ENCODE measurements at regions of chr3 and their contacts with region 1.

Region 1: DNA sequence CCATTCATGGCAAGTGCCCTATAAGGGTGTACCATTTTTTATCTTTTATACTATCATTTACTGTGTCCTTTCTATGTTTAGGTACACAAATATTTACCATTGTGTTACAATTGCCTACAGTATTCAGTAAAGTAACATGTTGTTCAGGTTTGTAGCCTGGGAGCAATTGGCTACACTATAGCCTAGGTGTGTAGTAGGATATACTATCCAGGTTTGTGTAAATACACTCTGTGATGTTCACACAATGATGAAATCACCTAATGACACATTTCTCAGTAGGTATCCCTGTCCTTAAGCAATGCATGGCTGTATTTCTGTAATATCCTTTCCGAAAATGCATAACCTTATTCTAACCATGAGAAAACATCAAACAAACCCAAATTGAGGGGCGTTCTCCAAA is 17.9 kb upstream of the CNOT10 start:
- DNase-seq: no peak
- ATAC-seq: no peak
- H3K4me3 ChIP-seq: no peak overlapping the region
- H3K27ac ChIP-seq: no peak overlapping the region
- H3K4me1 ChIP-seq: no peaks in the 10 kb centered on the region
- H3K27me3 ChIP-seq: no peaks in the 10 kb centered on the region
- CTCF ChIP-seq: no peak
- POLR2A ChIP-seq: no peak

Region 2: DNA sequence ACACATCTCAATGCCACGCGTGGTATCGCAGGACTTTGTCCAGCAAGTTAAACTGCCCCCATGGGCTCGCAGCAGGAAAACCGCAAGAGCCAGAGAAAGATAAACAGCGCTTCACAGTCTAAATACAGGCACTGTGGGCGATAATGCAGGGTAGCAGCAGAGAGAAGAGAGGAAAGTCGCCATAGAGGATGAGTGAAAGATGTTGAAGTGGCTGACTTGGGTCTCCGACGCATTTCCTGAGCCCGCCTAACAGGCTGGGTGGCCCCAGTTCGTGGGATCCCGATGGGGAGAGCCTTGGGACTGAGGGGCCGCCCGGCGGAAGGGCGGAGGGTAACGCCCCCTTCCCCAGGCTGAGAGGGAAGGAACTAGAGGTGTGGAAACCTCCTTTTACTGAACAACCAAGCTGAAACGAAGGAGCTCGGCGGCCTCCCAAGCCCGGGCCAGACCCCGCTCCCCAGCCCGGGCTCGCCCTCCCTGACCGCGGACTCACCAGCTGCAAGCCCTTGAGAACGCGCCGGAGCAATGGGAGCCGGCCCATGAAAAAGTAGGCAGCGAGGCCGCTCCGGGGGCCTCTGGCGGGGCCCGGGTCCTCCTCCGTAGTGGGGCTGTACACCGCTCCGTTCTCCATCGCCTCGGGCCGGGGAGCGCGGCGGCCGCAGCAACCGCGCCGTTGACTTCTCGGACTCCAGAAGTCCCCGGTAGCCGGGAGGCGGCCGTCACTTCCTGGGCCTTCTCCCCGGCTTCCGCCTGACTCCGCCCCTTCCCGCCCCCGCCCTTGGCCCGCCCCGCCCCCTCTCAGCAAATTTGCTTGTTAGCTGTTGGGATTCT is 164.8 kb before region 1 on chr3 and contains the start of gene CMTM6:
- intact Hi-C with region 1: loop called in 1 of 2 experiments (anchors 10 kb)
- DNase-seq: peak; percentile 88 to 89 (median 89)
- ATAC-seq: peak; percentile 84 to 91 (median 86)
- H3K4me3 ChIP-seq: peak within 1 kb of the TSS; percentile 94 to 98 (median 95)
- H3K27ac ChIP-seq: peak within 1 kb of the TSS; percentile 90 to 98 (median 96)
- H3K4me1 ChIP-seq: peaks cover 0 to 20% (median 7%) of the 10 kb centered on the region in 4 donors
- H3K27me3 ChIP-seq: no peaks in the 10 kb centered on the region
- CTCF ChIP-seq: no peak
- POLR2A ChIP-seq: peak; percentile 64
- total RNA-seq, gene CMTM6: 45.2 to 69.1 (median 57.2) TPM

Region 3: GRCh38 chr3:32510075-32510724 is 156.9 kb before region 1 on chr3:
- intact Hi-C with region 1: loop called (anchors 10 kb)
- DNase-seq: peak in 2 of 3 donors; percentile 43 to 71
- ATAC-seq: peak; percentile 95 to 99 (median 96)
- H3K4me3 ChIP-seq: no peak overlapping the region
- H3K27ac ChIP-seq: no peak overlapping the region
- H3K4me1 ChIP-seq: no peaks in the 10 kb centered on the region
- H3K27me3 ChIP-seq: no peaks in the 10 kb centered on the region
- CTCF ChIP-seq: peak; percentile 68 to 85 (median 73)
- POLR2A ChIP-seq: no peak

Region 4: DNA sequence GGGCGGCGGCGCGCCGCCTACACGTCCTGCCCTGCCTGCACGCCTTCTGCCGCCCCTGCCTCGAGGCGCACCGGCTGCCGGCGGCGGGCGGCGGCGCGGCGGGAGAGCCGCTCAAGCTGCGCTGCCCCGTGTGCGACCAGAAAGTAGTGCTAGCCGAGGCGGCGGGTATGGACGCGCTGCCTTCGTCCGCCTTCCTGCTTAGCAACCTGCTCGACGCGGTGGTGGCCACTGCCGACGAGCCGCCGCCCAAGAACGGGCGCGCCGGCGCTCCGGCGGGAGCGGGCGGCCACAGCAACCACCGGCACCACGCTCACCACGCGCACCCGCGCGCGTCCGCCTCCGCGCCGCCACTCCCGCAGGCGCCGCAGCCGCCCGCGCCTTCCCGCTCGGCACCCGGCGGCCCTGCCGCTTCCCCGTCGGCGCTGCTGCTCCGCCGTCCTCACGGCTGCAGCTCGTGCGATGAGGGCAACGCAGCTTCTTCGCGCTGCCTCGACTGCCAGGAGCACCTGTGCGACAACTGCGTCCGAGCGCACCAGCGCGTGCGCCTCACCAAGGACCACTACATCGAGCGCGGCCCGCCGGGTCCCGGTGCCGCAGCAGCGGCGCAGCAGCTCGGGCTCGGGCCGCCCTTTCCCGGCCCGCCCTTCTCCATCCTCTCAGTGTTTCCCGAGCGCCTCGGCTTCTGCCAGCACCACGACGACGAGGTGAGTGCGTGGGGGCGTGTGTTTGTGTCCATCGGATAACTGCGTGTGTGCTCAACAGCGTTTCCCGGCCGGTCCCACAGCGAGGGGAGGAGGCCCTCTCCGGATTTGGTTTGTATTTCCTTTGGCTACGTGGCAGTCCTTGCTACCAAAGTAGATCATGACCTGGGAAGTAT is 151.3 kb after region 1 on chr3:
- intact Hi-C with region 1: no loop called
- DNase-seq: no peak
- ATAC-seq: no peak
- H3K4me3 ChIP-seq: peak overlapping the region in 1 of 3 donors; percentile 19
- H3K27ac ChIP-seq: no peak overlapping the region
- H3K4me1 ChIP-seq: peaks cover 0 to 19% (median 0%) of the 10 kb centered on the region in 4 donors
- H3K27me3 ChIP-seq: peaks cover 6 to 48% of the 10 kb centered on the region in 2 donors
- CTCF ChIP-seq: no peak
- POLR2A ChIP-seq: no peak